ENCODE measurements at regions of chr5 and their contacts with region 1.

Region 1: DNA sequence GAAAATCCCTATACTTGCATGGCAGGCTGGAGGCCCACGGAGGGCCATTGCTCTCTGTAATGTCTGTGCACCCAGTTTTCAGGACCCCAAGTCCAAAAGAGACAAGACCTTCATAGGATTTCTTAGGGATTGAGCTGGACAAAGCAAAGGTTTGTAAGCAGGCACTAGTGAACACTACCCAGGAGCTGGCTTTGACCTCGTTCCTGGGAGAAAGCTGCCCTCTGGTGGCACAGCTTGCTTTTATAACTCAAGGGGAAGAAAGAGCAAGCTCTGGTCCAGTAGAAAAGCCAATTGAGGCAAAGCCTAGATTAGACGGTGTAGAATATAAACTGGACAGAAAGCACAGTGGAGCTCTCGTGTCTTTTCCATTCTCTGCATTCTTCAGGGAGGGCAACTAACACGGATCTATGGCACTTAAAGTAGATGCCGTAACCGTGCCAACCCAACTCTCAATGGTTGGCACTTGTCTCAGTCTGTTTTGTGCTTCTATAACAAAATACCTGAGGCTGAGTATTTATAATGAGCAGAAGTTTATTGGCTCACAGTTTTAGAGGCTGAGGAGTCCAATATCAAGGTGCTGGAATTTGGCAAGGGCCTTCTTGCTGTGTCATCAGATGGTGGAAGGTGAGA is 7.9 kb downstream of the GABRP start:
- DNase-seq: peak; percentile 78
- H3K4me3 ChIP-seq: no peak overlapping the region
- H3K27ac ChIP-seq: no peak overlapping the region
- H3K4me1 ChIP-seq: no peaks in the 10 kb centered on the region
- H3K27me3 ChIP-seq: no peaks in the 10 kb centered on the region
- CTCF ChIP-seq: peak; percentile 28 to 80 (median 72)
- POLR2A ChIP-seq: no peak

Region 2: DNA sequence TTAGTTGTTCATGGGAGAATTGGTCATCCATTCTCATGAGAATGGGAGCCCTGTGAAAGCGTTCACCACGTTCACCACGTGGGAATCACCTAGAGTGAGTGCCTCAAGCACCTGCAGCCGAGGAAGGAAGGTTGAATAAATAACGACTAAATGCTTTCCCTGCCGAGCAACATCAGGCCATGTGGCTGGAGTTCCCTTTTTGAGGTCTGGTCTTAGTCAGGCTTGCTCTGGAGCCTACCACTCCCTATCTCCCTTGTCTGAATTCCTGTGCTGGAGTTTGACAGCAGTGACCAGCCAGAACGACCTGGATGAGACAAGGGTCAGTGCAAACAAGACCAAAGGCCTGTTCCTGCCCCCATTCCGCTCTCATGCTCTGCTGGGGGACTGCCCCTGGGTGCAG is 430.7 kb before region 1 on chr5:
- intact Hi-C with region 1: no loop called
- DNase-seq: no peak
- H3K4me3 ChIP-seq: no peak overlapping the region
- H3K27ac ChIP-seq: no peak overlapping the region
- H3K4me1 ChIP-seq: peaks cover under 1% of the 10 kb centered on the region
- H3K27me3 ChIP-seq: no peaks in the 10 kb centered on the region
- CTCF ChIP-seq: no peak
- POLR2A ChIP-seq: no peak

Region 3: GRCh38 chr5:170638454-170639220 is 152.8 kb before region 1 on chr5:
- intact Hi-C with region 1: loop called (anchors 5 kb)
- DNase-seq: peak; percentile 47
- H3K4me3 ChIP-seq: no peak overlapping the region
- H3K27ac ChIP-seq: no peak overlapping the region
- H3K4me1 ChIP-seq: no peaks in the 10 kb centered on the region
- H3K27me3 ChIP-seq: no peaks in the 10 kb centered on the region
- CTCF ChIP-seq: peak; percentile 51 to 82 (median 60)
- POLR2A ChIP-seq: no peak

Region 4: DNA sequence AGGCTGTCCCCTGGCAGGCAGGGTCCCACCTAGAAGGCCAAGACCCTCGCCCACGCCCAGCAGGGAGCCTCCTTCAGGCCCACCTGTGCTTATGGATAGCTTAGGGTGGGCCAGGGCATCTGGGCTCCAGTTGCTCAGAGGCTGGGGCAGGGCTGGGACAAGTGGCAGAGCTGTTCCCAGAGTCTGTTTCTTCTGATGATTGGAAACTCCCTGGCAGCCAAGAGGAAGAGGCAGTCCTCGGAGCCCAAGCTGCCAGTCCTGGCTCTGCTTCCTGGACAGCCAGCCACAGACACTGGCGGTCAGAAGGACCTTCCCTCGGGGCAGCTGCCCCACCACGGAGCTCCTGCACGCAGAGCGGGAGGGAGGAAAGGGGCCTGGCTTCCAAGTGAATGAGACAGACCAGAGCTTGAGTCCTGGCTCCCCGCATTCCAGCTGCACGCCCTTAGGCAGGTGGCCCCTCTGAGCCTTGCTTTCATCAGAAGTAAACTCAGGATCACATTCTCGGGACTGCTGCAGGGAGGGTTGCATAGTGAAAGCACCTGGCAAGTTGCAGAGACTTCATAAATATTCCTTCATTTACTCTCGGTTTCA is 45.9 kb before region 1 on chr5:
- intact Hi-C with region 1: loop called (anchors 2 kb)
- DNase-seq: peak; percentile 62
- H3K4me3 ChIP-seq: no peak overlapping the region
- H3K27ac ChIP-seq: peak overlapping the region; percentile 70 to 74
- H3K4me1 ChIP-seq: peaks cover 2% of the 10 kb centered on the region
- H3K27me3 ChIP-seq: no peaks in the 10 kb centered on the region
- CTCF ChIP-seq: no peak
- POLR2A ChIP-seq: peak; percentile 48